ENCODE measurements at regions of chr2 and their contacts with region 1.

Region 1: GRCh38 chr2:150487537-150488429 is at the start of gene RND3:
- DNase-seq: peak; percentile 93 to 95
- ATAC-seq: peak; percentile 82 to 88 (median 86)
- H3K4me3 ChIP-seq: peak within 1 kb of the TSS; percentile 82
- H3K27ac ChIP-seq: peak within 1 kb of the TSS; percentile 83
- H3K4me1 ChIP-seq: peaks cover 18% of the 10 kb centered on the region
- H3K27me3 ChIP-seq: no peaks in the 10 kb centered on the region
- CTCF ChIP-seq: peak; percentile 85
- total RNA-seq, gene RND3: 8.8 to 25.7 (median 16.4) TPM

Region 2: GRCh38 chr2:149799013-149799705 is 688.6 kb before region 1 on chr2:
- intact Hi-C with region 1: loop called in 1 of 2 experiments (anchors 2 kb)
- DNase-seq: no peak
- ATAC-seq: peak in 3 of 4 donors; percentile 30 to 64 (median 54)
- H3K4me3 ChIP-seq: no peak overlapping the region
- H3K27ac ChIP-seq: no peak overlapping the region
- H3K4me1 ChIP-seq: no peaks in the 10 kb centered on the region
- H3K27me3 ChIP-seq: peaks cover 0 to 3% (median 0%) of the 10 kb centered on the region in 3 donors
- CTCF ChIP-seq: peak; percentile 43

Region 3: GRCh38 chr2:150280231-150280630 is 207.6 kb before region 1 on chr2:
- intact Hi-C with region 1: loop called in 1 of 2 experiments (anchors 10 kb)
- DNase-seq: no peak
- ATAC-seq: peak; percentile 40 to 81 (median 64)
- H3K4me3 ChIP-seq: no peak overlapping the region
- H3K27ac ChIP-seq: no peak overlapping the region
- H3K4me1 ChIP-seq: no peaks in the 10 kb centered on the region
- H3K27me3 ChIP-seq: no peaks in the 10 kb centered on the region
- CTCF ChIP-seq: no peak

Measured in psoas muscle (tissue), 8 donors.